Activated naive CD4-positive, alpha-beta T cell treated with anti-CD3 and anti-CD28 coated beads for 36 hours (primary cell): ENCODE measurements at regions of chr2 and their contacts with region 1.

Region 1: GRCh38 chr2:120174963-120175581 is 48.1 kb downstream of the TMEM185B start:
- DNase-seq: peak; percentile 28
- H3K4me3 Mint-ChIP-seq: no peak overlapping the region
- H3K27ac Mint-ChIP-seq: peak overlapping the region; percentile 60
- H3K4me1 Mint-ChIP-seq: peaks cover 47% of the 10 kb centered on the region
- H3K27me3 Mint-ChIP-seq: no peaks in the 10 kb centered on the region

Region 2: GRCh38 chr2:119366649-119367471 is 808.2 kb before region 1 on chr2 and contains the starts of genes C2orf76 and DBI:
- CTCF ChIA-PET with region 1: no interaction called
- intact Hi-C with region 1: loop called (anchors 5 kb)
- DNase-seq: peak; percentile 94
- H3K4me3 Mint-ChIP-seq: peak within 1 kb of the TSS; percentile 99
- H3K27ac Mint-ChIP-seq: peak within 1 kb of the TSS; percentile 92
- H3K4me1 Mint-ChIP-seq: peaks cover 42% of the 10 kb centered on the region
- H3K27me3 Mint-ChIP-seq: no peaks in the 10 kb centered on the region
- total RNA-seq, gene C2orf76: 9.5 to 11.1 TPM
- total RNA-seq, gene DBI: 133 to 134 TPM

Region 3: GRCh38 chr2:119678998-119679710 is 495.9 kb before region 1 on chr2 and contains the start of gene TMEM177:
- CTCF ChIA-PET with region 1: interaction called, 9 read pairs
- intact Hi-C with region 1: loop called (anchors 1 kb)
- DNase-seq: peak; percentile 89
- H3K4me3 Mint-ChIP-seq: peak within 1 kb of the TSS; percentile 81
- H3K27ac Mint-ChIP-seq: peak within 1 kb of the TSS; percentile 62
- H3K4me1 Mint-ChIP-seq: peaks cover 41% of the 10 kb centered on the region
- H3K27me3 Mint-ChIP-seq: no peaks in the 10 kb centered on the region
- total RNA-seq, gene TMEM177: 11.9 to 13.3 TPM

Region 4: DNA sequence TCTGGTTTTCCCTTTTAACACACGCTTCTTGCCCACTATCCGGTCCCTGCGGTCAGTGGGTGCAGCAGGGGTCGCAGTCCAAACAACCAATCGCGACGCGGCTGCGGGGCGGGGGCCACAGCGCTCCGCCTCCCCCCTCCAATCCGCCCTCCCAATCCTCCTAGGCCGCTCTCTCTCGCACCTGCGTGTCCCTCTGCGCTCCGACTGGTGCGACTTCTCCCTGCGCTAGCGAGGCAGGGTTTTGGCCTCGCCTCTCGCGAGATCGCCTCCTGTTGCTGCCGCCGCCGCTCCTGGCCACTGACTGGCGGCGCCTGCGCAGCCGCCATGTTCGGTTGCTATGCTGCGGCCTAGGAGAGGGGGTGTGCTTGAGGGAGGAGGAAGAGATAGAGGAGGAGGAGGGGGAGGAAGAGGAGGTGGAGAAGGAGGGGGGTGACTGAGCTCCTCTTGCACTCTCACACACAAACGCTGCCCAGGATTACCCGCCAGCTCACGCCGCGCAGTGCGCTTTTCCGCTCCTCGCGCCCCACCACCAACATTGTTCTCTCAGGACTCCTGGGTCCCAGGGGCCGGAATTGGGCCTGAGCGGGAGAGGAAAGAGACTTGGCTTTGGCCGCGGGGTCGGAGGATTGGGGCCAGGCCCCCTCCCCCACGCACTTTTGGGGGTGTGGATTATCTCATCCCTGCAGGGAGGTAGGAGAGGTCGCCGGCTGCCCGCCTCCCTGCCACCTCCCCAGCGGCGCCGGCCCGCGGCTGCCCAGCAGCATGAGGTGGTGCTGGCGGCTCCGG is 415.4 kb before region 1 on chr2 and contains the start of gene PTPN4:
- CTCF ChIA-PET with region 1: interaction called, 30 read pairs
- intact Hi-C with region 1: loop called (anchors 1 kb)
- DNase-seq: peak; percentile 96
- H3K4me3 Mint-ChIP-seq: peak within 1 kb of the TSS; percentile 86
- H3K27ac Mint-ChIP-seq: peak within 1 kb of the TSS; percentile 90
- H3K4me1 Mint-ChIP-seq: peaks cover 35% of the 10 kb centered on the region
- H3K27me3 Mint-ChIP-seq: no peaks in the 10 kb centered on the region
- total RNA-seq, gene PTPN4: 28.4 to 29.8 TPM

Region 5: DNA sequence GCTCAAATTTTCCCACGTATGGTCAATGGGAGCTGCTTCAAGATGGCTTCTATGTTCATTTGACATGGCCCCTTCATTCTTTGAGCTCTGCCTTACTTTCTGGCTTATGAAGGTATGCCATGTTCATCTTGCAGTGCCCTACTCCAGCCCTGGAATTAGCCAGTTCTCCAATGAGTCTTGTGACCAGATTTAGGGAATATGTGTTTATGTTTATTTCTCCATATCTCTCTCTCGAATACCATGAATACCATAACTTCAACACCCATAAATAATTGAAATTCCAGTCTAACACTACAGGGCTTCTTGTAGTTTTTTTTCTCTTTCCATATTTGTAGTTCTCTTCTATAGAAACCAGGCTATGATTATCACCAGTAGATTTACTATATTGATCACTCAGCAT is 122.5 kb before region 1 on chr2:
- CTCF ChIA-PET with region 1: no interaction called
- intact Hi-C with region 1: no loop called
- DNase-seq: no peak
- H3K4me3 Mint-ChIP-seq: no peak overlapping the region
- H3K27ac Mint-ChIP-seq: no peak overlapping the region
- H3K4me1 Mint-ChIP-seq: no peaks in the 10 kb centered on the region
- H3K27me3 Mint-ChIP-seq: no peaks in the 10 kb centered on the region

Region 6: DNA sequence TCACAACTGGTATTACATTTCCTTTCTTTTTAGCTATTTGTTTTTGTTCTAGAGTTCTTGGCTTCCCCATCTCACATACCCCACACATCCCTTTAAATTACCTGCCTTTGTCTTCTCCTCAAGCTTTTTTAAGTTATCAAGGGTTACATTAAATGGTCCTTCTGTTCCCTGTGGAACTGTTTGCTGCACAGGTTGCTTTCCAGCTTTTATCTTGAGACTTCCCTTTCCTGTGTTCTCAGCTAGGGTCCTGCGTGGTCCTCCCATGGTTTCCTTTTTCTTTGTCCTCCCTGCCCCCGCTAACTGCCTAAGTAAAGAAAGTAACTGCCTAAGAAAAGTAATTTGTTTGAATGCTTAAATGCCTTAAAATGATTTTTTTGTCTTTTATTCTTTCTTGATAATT is 95.4 kb before region 1 on chr2:
- CTCF ChIA-PET with region 1: no interaction called
- intact Hi-C with region 1: no loop called
- DNase-seq: no peak
- H3K4me3 Mint-ChIP-seq: no peak overlapping the region
- H3K27ac Mint-ChIP-seq: no peak overlapping the region
- H3K4me1 Mint-ChIP-seq: no peaks in the 10 kb centered on the region
- H3K27me3 Mint-ChIP-seq: no peaks in the 10 kb centered on the region

Region 7: DNA sequence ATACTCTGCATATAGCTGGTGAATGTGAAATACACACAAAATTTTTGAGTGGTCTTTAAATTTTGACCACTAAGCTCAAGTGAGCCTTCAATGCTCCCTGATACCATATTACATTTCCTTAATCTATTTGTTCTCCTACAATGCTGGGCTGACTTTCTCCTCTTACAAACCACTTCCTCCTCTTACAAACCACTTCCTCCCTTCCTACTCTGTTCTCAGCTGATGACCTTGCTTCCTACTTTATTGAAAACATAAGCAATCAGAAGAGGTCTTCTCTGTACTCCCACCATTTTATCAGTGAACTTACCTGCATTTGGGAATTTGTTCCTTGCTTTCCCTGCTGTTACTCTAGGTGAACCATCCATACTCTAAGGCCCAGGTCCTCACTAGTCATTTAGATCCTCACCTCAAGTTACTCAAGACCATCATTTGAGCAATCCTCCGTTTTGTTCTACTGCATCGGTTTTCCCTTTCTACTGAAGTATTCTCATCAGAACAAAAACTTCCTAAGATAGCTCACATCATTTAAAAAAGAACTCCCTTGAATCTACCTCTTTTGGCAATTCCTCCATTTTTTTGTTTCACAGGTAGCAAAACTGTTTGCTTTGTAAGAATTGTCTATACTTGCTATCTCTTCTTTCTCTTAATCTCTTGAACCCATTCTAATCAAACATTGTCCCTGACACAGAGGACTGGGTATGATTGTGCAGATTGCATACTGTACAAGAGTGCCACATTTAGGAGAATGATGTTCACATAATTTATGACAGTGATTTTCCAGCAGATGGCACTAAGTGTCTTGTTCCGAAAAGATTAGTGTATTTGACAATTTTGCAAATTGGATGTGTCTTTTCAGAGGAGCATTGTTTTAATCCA is 65.6 kb before region 1 on chr2:
- CTCF ChIA-PET with region 1: interaction called, 126 read pairs
- intact Hi-C with region 1: loop called (anchors 1 kb)
- DNase-seq: no peak
- H3K4me3 Mint-ChIP-seq: no peak overlapping the region
- H3K27ac Mint-ChIP-seq: peak overlapping the region; percentile 78
- H3K4me1 Mint-ChIP-seq: peaks cover 27% of the 10 kb centered on the region
- H3K27me3 Mint-ChIP-seq: no peaks in the 10 kb centered on the region

Region 8: DNA sequence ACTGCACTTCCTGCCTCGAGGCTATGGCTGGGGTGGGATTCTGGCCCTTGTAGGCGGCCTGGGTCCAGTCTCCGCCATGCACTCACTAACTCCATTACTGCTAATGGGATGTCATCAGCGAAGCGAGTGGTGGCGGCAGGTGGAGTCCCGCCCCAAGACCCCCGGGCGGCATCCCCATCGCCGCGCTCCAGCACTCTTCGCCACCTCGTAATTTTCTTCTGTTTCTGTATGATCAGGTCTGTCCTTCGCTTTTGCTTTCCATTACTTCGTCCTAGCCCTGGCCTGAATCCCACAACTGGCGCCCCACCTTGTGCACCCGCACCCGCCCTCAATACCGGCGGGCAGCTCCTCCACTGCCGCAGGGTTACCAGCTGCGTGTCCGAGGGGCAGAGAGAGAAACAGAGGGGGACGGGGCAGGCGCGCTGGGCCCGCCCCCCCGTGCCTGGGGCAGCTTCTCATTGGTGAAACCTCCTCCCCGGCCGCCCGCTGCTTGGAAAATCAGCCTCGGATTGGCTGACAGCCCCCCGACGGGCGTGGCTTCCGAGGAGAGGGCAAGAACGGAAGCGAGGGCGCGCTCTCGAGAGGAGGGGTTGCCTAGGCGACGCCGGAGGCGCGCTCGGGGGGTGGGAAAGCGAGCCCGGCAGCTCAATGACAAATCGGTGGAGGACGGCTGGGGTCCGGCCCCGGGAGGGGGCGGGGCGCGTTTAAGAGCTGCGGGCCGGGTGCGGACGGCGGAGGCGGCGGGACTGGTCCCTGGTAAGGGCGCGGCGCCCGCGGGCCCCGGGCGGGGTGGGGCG is 77.4 kb after region 1 on chr2 and contains the start of gene RALB:
- CTCF ChIA-PET with region 1: interaction called, 5 read pairs
- intact Hi-C with region 1: loop called (anchors 1 kb)
- DNase-seq: peak; percentile 99
- H3K4me3 Mint-ChIP-seq: peak within 1 kb of the TSS; percentile 96
- H3K27ac Mint-ChIP-seq: peak within 1 kb of the TSS; percentile 74
- H3K4me1 Mint-ChIP-seq: peaks cover 40% of the 10 kb centered on the region
- H3K27me3 Mint-ChIP-seq: no peaks in the 10 kb centered on the region
- total RNA-seq, gene RALB: 16.4 to 19.3 TPM